Activated CD4-positive, alpha-beta T cell treated with anti-CD3 and anti-CD28 coated beads, Interleukin-2, amount 10 ng/mL, durations not matched to agents 24 days and 14 days (primary cell): ENCODE measurements at regions of chr2 and their contacts with region 1.

Region 1: DNA sequence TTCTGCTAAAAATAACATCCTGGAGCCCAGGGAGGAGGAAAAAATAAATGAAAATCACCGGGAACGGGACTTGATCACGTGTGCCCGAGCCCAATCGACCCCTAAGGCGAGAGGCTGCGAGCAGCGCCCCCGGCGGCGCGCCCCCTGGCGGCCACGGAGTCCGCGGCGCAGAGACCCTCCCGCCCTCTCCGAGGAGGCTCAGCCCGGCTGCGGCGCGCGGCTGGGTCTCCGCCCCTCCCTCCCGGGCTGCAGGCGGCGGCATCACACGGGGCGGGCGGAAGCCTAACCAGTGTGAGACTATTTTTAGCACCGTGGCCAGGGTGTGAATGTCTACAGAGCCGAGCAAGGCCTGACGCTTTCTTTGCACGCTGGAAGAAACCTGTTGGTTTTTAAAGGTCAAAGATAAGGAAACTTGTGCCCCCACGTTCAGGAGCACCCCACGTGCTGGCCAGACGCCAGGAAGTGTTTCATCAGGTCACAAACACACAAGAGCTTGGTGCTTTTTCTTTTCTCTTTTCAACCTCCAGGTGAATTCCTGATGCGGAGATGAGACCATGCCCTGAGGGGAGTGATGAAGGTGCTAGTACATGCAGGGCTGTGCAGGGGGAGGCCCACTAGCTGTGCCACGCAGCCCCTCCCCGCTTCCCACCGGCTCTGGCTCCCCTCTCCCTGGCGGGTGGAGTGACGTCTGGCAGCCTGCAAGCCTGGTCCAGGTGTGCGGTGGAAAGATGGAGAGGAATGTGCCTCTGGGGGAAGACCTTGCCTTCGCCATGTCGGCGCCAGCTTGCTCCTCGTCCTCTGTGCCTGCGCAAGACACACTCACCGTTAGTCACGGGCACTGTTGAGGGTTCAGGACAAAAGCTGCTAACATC is 35.3 kb upstream of the DNMT3A start:
- DNase-seq: peak; percentile 98
- H3K4me3 Mint-ChIP-seq: peak overlapping the region; percentile 76
- H3K27ac Mint-ChIP-seq: peak overlapping the region; percentile 93
- H3K4me1 Mint-ChIP-seq: peaks cover 30% of the 10 kb centered on the region
- H3K27me3 Mint-ChIP-seq: no peaks in the 10 kb centered on the region

Region 2: DNA sequence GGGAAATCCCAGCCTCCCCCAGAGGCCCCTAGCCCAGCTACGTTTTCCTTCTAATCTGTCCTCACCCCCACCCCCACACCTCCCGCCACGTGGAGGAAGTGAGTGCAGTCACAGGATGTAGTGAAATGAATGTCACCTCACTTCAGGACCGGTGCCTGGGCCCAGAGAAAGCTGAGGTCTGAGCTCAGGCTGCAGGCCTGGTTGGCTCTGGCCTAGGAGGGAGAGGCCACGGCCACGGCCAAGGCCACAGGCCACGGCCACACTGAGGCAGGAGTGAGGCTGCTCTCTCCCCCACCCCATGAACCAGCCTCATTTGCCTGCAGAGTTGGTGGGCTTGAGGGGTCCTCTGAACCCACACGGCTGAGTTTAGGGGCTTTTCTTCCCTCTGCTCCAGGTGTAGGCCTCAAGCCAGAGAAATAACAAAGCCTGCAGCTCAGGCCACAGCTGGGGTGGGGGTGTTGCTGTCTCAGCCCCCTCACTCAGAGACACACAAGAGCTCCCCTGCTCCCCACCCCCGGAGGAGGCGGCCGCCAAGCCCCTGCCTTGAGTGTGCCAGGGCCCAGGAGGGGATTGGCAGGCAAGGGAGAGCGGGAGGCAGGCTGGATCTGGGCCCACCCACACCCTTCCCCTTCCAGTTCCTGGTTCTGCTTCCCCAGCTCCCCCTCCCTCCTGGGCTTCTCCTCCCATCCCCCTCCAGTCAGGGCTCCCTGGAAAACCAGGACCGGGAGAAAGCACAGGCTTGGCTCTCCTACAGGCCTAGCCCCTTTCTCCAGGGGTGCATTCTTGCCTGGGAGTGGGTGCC is 62.3 kb before region 1 on chr2:
- intact Hi-C with region 1: loop called (anchors 2 kb)
- DNase-seq: peak; percentile 94
- H3K4me3 Mint-ChIP-seq: peak overlapping the region; percentile 91
- H3K27ac Mint-ChIP-seq: peak overlapping the region; percentile 97
- H3K4me1 Mint-ChIP-seq: peaks cover 44% of the 10 kb centered on the region
- H3K27me3 Mint-ChIP-seq: no peaks in the 10 kb centered on the region

Region 3: DNA sequence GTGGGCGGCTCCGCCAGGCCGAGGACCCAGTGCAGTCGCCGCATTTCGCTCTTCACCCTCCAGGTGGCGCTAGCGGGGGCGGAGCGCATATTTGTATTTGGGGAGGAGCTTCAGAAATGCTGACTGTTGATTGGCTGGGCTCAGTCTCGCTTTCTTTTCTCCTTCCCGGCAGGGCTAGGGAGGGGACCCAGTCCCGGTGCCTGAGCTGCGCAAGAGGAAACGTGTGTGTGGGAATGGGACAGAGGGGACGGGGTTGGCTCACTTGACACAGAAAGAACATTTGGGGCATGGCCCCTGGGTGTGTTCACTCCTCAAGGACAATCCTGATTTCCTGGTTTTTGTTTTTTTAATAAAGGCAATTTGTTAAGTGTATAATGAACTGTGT is 14.9 kb before region 1 on chr2:
- intact Hi-C with region 1: loop called (anchors 1 kb)
- DNase-seq: peak; percentile 99
- H3K4me3 Mint-ChIP-seq: peak overlapping the region; percentile 84
- H3K27ac Mint-ChIP-seq: peak overlapping the region; percentile 91
- H3K4me1 Mint-ChIP-seq: peaks cover 19% of the 10 kb centered on the region
- H3K27me3 Mint-ChIP-seq: no peaks in the 10 kb centered on the region

Region 4: DNA sequence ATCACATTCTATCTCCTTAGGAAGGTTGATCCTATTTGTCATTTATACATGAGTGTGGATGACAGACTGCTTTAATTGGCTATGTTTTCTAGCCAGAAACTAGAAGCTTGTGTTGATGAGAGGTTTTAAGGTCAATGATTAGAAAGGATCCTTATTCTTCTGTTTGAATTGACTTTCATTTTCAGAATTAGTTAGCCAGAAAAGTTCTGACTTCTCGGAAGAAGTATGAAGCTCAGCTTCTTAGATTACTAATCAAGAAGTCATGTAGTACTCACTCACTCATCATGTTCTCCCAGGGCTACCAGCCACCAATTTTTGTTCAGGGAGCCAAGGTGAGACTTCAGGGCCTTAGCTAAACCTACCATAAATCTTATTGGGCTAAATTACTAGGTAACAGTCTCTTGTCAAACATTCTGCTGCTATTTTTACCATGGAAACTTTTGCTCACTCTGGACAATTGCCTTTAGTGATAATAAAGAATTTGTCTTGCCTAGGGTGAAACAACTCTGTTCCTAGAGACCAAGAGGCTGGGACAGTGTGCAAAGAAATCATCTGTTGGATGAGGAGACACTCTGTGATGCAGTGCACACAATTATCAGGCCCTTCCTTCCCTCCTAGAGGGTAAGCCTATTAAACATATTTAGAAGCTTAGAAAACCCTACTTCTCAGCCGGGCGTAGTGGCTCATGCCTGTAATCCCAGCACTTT is 76.4 kb after region 1 on chr2:
- intact Hi-C with region 1: loop called (anchors 2 kb)
- DNase-seq: peak; percentile 82
- H3K4me3 Mint-ChIP-seq: peak overlapping the region; percentile 57
- H3K27ac Mint-ChIP-seq: peak overlapping the region; percentile 91
- H3K4me1 Mint-ChIP-seq: peaks cover 21% of the 10 kb centered on the region
- H3K27me3 Mint-ChIP-seq: no peaks in the 10 kb centered on the region

Region 5: GRCh38 chr2:25491966-25492532 is 115.1 kb after region 1 on chr2:
- intact Hi-C with region 1: no loop called
- DNase-seq: no peak
- H3K4me3 Mint-ChIP-seq: no peak overlapping the region
- H3K27ac Mint-ChIP-seq: no peak overlapping the region
- H3K4me1 Mint-ChIP-seq: peaks cover 12% of the 10 kb centered on the region
- H3K27me3 Mint-ChIP-seq: no peaks in the 10 kb centered on the region